Panc1 (cell line): ENCODE measurements at regions of chr19 and their contacts with region 1.

Region 1: GRCh38 chr19:57231686-57232085 is 863 bp downstream of the AURKC start:
- DNase-seq: no peak
- ATAC-seq: no peak
- H3K4me3 ChIP-seq: no peak overlapping the region
- H3K27ac ChIP-seq: no peak overlapping the region
- H3K4me1 ChIP-seq: no peaks in the 10 kb centered on the region
- H3K27me3 ChIP-seq: no peaks in the 10 kb centered on the region
- CTCF ChIP-seq: no peak

Region 2: GRCh38 chr19:57171551-57172081 is 60.1 kb before region 1 on chr19:
- CTCF ChIA-PET with region 1: no interaction called
- POLR2A ChIA-PET with region 1: interaction called, 22 read pairs
- in situ Hi-C with region 1: no loop called
- intact Hi-C with region 1: no loop called
- DNase-seq: no peak
- ATAC-seq: peak; percentile 76
- H3K4me3 ChIP-seq: peak overlapping the region; percentile 24 to 29
- H3K27ac ChIP-seq: no peak overlapping the region
- H3K4me1 ChIP-seq: no peaks in the 10 kb centered on the region
- H3K27me3 ChIP-seq: no peaks in the 10 kb centered on the region
- CTCF ChIP-seq: no peak